T-cell (primary cell): ENCODE measurements at regions of chr3 and their contacts with region 1.

Region 1: GRCh38 chr3:136752422-136753325 is 496 bp upstream of the STAG1 start:
- DNase-seq: peak; percentile 94 to 99 (median 98)
- ATAC-seq: peak; percentile 82 to 88 (median 86)
- H3K4me3 ChIP-seq: peak overlapping the region; percentile 68 to 80
- H3K4me3 Mint-ChIP-seq: peak overlapping the region; percentile 90 to 93 (median 92)
- H3K27ac ChIP-seq: peak overlapping the region; percentile 96
- H3K27ac Mint-ChIP-seq: peak overlapping the region; percentile 95 to 96
- H3K4me1 ChIP-seq: peaks cover 17 to 32% of the 10 kb centered on the region in 2 experiments
- H3K4me1 Mint-ChIP-seq: peaks cover 41 to 49% (median 46%) of the 10 kb centered on the region in 3 donors
- H3K27me3 ChIP-seq: no peaks in the 10 kb centered on the region
- H3K27me3 Mint-ChIP-seq: no peaks in the 10 kb centered on the region

Region 2: GRCh38 chr3:136075218-136075808 is 677.4 kb before region 1 on chr3:
- CTCF ChIA-PET with region 1: interaction called, 3 to 21 read pairs
- POLR2A ChIA-PET with region 1: no interaction called
- DNase-seq: peak; percentile 34 to 88 (median 63)
- ATAC-seq: peak; percentile 49 to 71 (median 66)
- H3K4me3 ChIP-seq: no peak overlapping the region
- H3K4me3 Mint-ChIP-seq: no peak overlapping the region
- H3K27ac ChIP-seq: no peak overlapping the region
- H3K27ac Mint-ChIP-seq: no peak overlapping the region
- H3K4me1 ChIP-seq: no peaks in the 10 kb centered on the region
- H3K4me1 Mint-ChIP-seq: peaks cover 0 to 5% (median 2%) of the 10 kb centered on the region in 3 donors
- H3K27me3 ChIP-seq: no peaks in the 10 kb centered on the region
- H3K27me3 Mint-ChIP-seq: no peaks in the 10 kb centered on the region

Region 3: GRCh38 chr3:136196401-136197158 is 556.1 kb before region 1 on chr3:
- CTCF ChIA-PET with region 1: interaction called, 5 to 31 read pairs
- POLR2A ChIA-PET with region 1: interaction called, 4 to 14 read pairs
- DNase-seq: peak; percentile 89 to 99 (median 96)
- ATAC-seq: peak; percentile 68 to 72 (median 71)
- H3K4me3 ChIP-seq: peak overlapping the region; percentile 75 to 94
- H3K4me3 Mint-ChIP-seq: peak overlapping the region; percentile 88 to 99 (median 94)
- H3K27ac ChIP-seq: peak overlapping the region; percentile 96
- H3K27ac Mint-ChIP-seq: peak overlapping the region; percentile 98 to 100
- H3K4me1 ChIP-seq: peaks cover 13 to 24% of the 10 kb centered on the region in 2 experiments
- H3K4me1 Mint-ChIP-seq: peaks cover 32 to 52% (median 33%) of the 10 kb centered on the region in 3 donors
- H3K27me3 ChIP-seq: peaks cover 0 to 4% of the 10 kb centered on the region in 2 experiments
- H3K27me3 Mint-ChIP-seq: no peaks in the 10 kb centered on the region

Region 4: DNA sequence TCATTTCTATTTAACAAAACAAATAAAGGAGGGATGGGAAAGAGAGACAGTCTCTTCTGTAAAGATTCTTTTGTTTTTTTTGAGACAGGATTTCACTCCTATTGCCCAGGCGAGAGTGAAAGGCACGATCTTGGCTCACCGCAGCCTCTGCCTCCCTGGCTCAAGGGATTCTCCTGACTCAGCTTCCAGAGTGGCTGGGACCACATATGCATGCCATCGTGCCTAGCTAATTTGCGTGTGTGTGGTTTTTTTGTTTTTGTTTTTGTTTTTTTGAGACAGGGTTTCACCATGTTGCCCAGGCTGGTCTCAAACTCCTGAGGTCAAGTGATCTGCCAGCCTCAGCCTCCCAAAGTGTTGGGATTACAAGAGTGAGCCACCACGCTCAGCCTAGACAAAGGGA is 23.8 kb before region 1 on chr3:
- CTCF ChIA-PET with region 1: interaction called in 1 of 2 experiments, 24 read pairs
- POLR2A ChIA-PET with region 1: interaction called in 1 of 2 experiments, 3 read pairs
- DNase-seq: no peak
- ATAC-seq: no peak
- H3K4me3 ChIP-seq: no peak overlapping the region
- H3K4me3 Mint-ChIP-seq: peak overlapping the region in 1 of 3 donors; percentile 21
- H3K27ac ChIP-seq: no peak overlapping the region
- H3K27ac Mint-ChIP-seq: peak overlapping the region in 1 of 2 donors; percentile 61
- H3K4me1 ChIP-seq: peaks cover 38 to 43% of the 10 kb centered on the region in 2 experiments
- H3K4me1 Mint-ChIP-seq: peaks cover 66 to 75% (median 74%) of the 10 kb centered on the region in 3 donors
- H3K27me3 ChIP-seq: no peaks in the 10 kb centered on the region
- H3K27me3 Mint-ChIP-seq: no peaks in the 10 kb centered on the region

Region 5: DNA sequence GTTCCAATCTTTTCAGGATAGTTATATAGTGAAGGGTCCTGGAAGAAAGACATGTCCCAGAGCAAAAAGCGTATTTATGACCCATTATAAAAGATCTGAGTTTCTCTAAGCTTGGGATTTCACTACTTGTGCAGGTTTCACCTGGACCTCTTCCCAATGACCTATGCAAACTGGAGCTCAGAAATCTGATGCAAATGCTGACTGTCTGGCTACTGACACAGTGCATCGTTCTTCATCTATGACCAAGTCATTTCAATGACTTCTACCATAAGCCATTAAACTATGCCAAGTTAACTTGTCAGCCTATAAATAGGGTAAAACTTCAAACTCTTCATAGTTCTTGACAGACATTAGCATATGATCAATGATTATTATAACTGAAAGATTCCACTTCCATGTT is 11.6 kb before region 1 on chr3:
- CTCF ChIA-PET with region 1: interaction called, 5 to 12 read pairs
- POLR2A ChIA-PET with region 1: interaction called in 1 of 2 experiments, 7 read pairs
- DNase-seq: no peak
- ATAC-seq: no peak
- H3K4me3 ChIP-seq: no peak overlapping the region
- H3K4me3 Mint-ChIP-seq: no peak overlapping the region
- H3K27ac ChIP-seq: no peak overlapping the region
- H3K27ac Mint-ChIP-seq: no peak overlapping the region
- H3K4me1 ChIP-seq: peaks cover 3 to 4% of the 10 kb centered on the region in 2 experiments
- H3K4me1 Mint-ChIP-seq: peaks cover 39 to 55% (median 53%) of the 10 kb centered on the region in 3 donors
- H3K27me3 ChIP-seq: no peaks in the 10 kb centered on the region
- H3K27me3 Mint-ChIP-seq: no peaks in the 10 kb centered on the region

Region 6: DNA sequence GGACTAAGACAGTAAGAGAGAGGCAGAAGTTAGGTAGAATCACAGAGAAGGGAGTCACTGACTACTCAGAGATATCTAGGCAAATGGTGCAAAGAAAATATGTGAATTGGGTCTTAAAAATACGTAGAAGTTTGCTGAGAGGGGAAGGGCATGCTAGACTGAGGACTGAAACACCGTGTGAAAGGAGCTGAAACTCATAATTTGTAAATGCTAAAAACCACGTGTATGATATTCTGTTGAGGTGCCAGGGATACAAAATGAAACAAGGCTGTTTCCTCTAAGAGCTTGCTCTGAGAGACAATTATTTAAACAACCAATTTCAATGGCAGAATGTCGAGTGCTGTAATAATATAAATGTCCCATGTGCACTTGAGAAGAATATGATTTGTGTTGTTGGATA is 156.5 kb after region 1 on chr3:
- CTCF ChIA-PET with region 1: interaction called in 1 of 2 experiments, 17 read pairs
- POLR2A ChIA-PET with region 1: no interaction called
- DNase-seq: peak in 1 of 35 experiments; percentile 21
- ATAC-seq: peak in 2 of 4 experiments; percentile 17 to 34
- H3K4me3 ChIP-seq: no peak overlapping the region
- H3K4me3 Mint-ChIP-seq: peak overlapping the region; percentile 7 to 24 (median 18)
- H3K27ac ChIP-seq: peak overlapping the region; percentile 60
- H3K27ac Mint-ChIP-seq: peak overlapping the region; percentile 76 to 92
- H3K4me1 ChIP-seq: peaks cover 22 to 29% of the 10 kb centered on the region in 2 experiments
- H3K4me1 Mint-ChIP-seq: peaks cover 83 to 88% (median 86%) of the 10 kb centered on the region in 3 donors
- H3K27me3 ChIP-seq: no peaks in the 10 kb centered on the region
- H3K27me3 Mint-ChIP-seq: no peaks in the 10 kb centered on the region